Right ventricle myocardium superior (tissue), 1 donor: ENCODE measurements at regions of chr14 and their contacts with region 1.

Region 1: GRCh38 chr14:100192672-100193416 is 33.4 kb upstream of the DEGS2 start:
- DNase-seq: peak; percentile 100
- ATAC-seq: peak; percentile 99

Region 2: DNA sequence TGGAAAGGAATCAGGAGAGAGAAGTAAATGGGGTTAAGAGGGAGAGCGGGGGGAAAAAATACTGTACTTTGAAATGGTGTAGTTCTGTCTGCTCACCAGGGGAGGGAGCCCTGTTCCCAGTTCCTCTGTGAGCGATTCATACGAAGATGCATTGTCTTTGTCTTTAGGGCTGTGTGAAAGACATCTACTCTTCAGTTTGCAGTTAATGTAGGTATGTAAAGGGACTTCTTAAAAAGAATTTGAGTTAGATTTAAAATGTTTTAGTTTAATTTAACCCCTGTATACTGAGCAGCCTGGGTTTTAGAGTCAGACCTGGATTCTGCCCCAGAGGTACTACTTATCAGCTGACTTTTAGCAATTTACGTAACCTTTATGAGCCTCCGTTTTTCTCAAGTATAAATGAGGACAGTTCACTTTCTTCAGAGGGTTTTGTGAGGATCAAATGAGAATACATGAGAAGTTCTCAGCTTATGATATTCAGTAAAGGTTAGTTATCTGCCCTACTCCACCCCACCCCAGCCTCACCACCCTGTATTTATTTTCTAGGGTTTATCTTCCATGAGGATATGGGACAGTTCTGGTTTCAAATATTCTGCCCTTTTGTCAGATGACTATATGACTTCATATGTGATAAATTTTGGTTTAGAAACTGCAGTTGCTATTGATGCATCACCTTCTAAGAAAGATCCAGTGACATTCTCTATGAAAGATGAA is 210.2 kb before region 1 on chr14:
- intact Hi-C with region 1: loop called (anchors 5 kb)
- DNase-seq: no peak
- ATAC-seq: peak; percentile 90

Region 3: DNA sequence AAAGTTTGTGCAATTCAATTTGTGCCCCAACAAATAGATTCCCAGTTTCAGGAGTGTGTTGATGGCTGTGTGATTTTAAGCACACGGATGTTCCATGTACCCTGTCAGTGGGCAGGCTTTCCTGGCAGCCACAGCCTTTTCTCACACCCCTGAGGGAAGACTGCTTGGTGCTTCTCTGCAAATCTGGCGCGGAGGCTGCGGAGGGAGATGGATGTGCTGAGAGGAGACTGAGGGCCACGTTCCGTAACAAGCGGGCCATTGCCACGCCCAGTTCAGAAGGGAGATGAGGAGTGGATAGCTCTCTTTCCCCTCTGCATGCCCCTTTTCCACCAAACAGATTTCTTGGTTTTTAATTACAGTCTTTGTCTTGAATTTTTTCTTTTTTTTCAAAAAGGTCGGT is 305.2 kb after region 1 on chr14:
- intact Hi-C with region 1: no loop called
- DNase-seq: no peak
- ATAC-seq: no peak